Common myeloid progenitor, CD34-positive (primary cell): ENCODE measurements at regions of chr5 and their contacts with region 1.

Region 1: DNA sequence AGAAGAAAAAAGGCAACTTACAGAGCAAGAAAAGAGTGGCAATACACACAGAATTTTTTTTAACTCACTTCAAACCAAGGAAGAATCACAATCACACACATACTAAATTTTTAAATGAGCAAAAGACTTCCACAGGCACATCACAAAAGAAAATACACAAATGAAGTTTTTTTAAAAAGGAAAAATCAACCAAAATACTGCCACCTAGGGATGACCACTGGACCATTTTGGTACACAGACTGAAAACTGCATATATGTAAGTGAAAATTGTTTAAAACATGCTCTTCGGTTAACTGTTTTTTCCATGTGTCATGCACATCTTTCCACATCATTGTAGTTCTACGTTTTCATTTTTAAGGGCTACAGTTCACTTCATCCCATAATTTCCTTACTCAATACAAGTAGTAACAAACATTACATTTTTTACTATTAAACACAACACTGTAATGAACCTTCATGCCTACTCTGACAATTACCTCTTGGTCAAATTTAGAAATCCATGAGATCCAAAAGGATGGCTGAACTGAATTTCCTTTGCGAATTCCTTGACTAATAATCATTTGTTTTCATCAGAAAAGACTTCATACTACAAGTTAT is 79.0 kb downstream of the FBXW11 start:
- DNase-seq: peak in 2 of 3 donors; percentile 33 to 45
- H3K4me3 ChIP-seq: no peak overlapping the region
- H3K27ac ChIP-seq: no peak overlapping the region
- H3K4me1 ChIP-seq: no peaks in the 10 kb centered on the region
- H3K27me3 ChIP-seq: no peaks in the 10 kb centered on the region

Region 2: DNA sequence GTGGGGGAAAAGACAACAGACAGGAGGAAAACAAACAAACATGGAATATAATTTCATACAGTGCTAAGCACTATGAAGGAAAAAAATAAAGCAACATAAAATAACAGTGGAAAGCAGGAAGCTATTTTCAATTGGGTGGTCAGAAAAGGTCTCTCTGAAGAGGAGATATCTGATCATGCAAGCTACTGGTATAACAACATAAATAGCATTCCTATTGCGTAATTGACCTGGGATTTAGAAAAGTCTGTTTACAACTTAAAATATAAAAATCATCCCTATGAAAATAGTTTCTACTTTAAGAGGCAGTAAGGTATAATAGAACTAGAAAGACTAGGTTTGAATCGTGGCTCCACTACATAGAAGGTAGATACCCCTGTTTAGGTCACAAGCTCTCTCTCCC is 17.6 kb after region 1 on chr5:
- CTCF ChIA-PET with region 1: interaction called, 16 read pairs
- POLR2A ChIA-PET with region 1: interaction called, 3 read pairs
- DNase-seq: no peak
- H3K4me3 ChIP-seq: no peak overlapping the region
- H3K27ac ChIP-seq: no peak overlapping the region
- H3K4me1 ChIP-seq: peaks cover 0 to 6% (median 2%) of the 10 kb centered on the region in 4 experiments
- H3K27me3 ChIP-seq: no peaks in the 10 kb centered on the region